IMR-90 (cell line): ENCODE measurements at regions of chr14 and their contacts with region 1.

Region 1: GRCh38 chr14:54652188-54652587 is 85.3 kb downstream of the SAMD4A start:
- DNase-seq: peak; percentile 100
- ATAC-seq: peak; percentile 88
- H3K4me3 ChIP-seq: no peak overlapping the region
- H3K27ac ChIP-seq: peak overlapping the region; percentile 64; the same call in 1 of the 2 replicates
- H3K4me1 ChIP-seq: peaks cover 41% of the 10 kb centered on the region
- H3K27me3 ChIP-seq: no peaks in the 10 kb centered on the region
- CTCF ChIP-seq: no peak
- POLR2A ChIP-seq: no peak
- RAD21 ChIP-seq: no peak; the same call in 1 of the 2 replicates

Region 2: DNA sequence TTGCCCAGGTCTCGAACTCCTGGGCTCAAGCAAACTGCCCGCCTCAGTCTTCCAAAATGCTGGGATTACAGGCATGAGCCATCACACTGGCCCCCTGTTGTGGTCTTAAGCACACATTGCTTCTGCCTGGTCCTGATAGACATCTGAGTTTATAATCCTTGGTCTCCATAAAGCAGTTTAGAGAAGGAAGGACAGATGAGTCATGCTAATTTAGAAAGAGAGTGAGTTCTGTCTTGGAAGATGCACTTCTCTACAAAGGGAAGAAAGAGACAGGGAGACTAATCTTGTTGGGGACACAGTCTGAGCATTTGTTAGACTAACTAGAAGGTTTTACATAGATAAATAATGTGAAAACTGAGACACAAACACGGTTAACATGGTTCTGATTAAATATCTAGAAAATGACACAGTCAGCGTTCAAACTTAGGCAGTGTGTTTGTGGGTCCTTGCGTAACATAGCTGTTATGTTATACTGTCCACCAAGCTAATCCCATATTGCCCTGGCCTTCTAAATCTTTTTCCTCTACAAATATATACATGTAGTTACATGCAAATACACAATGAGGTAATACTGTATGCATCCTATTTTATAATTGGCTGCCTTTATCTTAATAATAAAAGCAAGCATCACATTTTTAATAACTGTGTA is 54.3 kb before region 1 on chr14:
- CTCF ChIA-PET with region 1: interaction called, 3 read pairs
- POLR2A ChIA-PET with region 1: no interaction called
- dilution Hi-C with region 1: no loop called
- in situ Hi-C with region 1: no loop called
- intact Hi-C with region 1: loop called (anchors 2 kb)
- DNase-seq: peak; percentile 70
- ATAC-seq: peak; percentile 43
- H3K4me3 ChIP-seq: no peak overlapping the region
- H3K27ac ChIP-seq: peak overlapping the region; percentile 76; the same call in 1 of the 2 replicates
- H3K4me1 ChIP-seq: peaks cover 14% of the 10 kb centered on the region
- H3K27me3 ChIP-seq: no peaks in the 10 kb centered on the region
- CTCF ChIP-seq: no peak
- POLR2A ChIP-seq: no peak
- RAD21 ChIP-seq: no peak

Region 3: GRCh38 chr14:54669721-54670561 is 17.8 kb after region 1 on chr14:
- CTCF ChIA-PET with region 1: interaction called, 3 read pairs
- POLR2A ChIA-PET with region 1: no interaction called
- dilution Hi-C with region 1: no loop called
- in situ Hi-C with region 1: no loop called
- intact Hi-C with region 1: loop called (anchors 2 kb)
- DNase-seq: peak; percentile 85
- ATAC-seq: peak; percentile 62
- H3K4me3 ChIP-seq: no peak overlapping the region
- H3K27ac ChIP-seq: no peak overlapping the region
- H3K4me1 ChIP-seq: peaks cover 32% of the 10 kb centered on the region
- H3K27me3 ChIP-seq: no peaks in the 10 kb centered on the region
- CTCF ChIP-seq: no peak
- POLR2A ChIP-seq: no peak
- RAD21 ChIP-seq: no peak

Region 4: GRCh38 chr14:54730156-54730961 is 78.2 kb after region 1 on chr14:
- CTCF ChIA-PET with region 1: no interaction called
- POLR2A ChIA-PET with region 1: no interaction called
- dilution Hi-C with region 1: no loop called
- in situ Hi-C with region 1: no loop called
- intact Hi-C with region 1: no loop called
- DNase-seq: peak; percentile 78
- ATAC-seq: peak; percentile 62
- H3K4me3 ChIP-seq: no peak overlapping the region
- H3K27ac ChIP-seq: peak overlapping the region; percentile 57; the same call in 1 of the 2 replicates
- H3K4me1 ChIP-seq: peaks cover 14% of the 10 kb centered on the region
- H3K27me3 ChIP-seq: no peaks in the 10 kb centered on the region
- CTCF ChIP-seq: no peak
- POLR2A ChIP-seq: no peak
- RAD21 ChIP-seq: no peak

Region 5: GRCh38 chr14:54766276-54767138 is 114.3 kb after region 1 on chr14:
- CTCF ChIA-PET with region 1: no interaction called
- POLR2A ChIA-PET with region 1: no interaction called
- dilution Hi-C with region 1: no loop called
- in situ Hi-C with region 1: no loop called
- intact Hi-C with region 1: no loop called
- DNase-seq: no peak
- ATAC-seq: no peak
- H3K4me3 ChIP-seq: no peak overlapping the region
- H3K27ac ChIP-seq: no peak overlapping the region
- H3K4me1 ChIP-seq: peaks cover 8% of the 10 kb centered on the region
- H3K27me3 ChIP-seq: no peaks in the 10 kb centered on the region
- CTCF ChIP-seq: no peak
- POLR2A ChIP-seq: no peak
- RAD21 ChIP-seq: no peak

Region 6: DNA sequence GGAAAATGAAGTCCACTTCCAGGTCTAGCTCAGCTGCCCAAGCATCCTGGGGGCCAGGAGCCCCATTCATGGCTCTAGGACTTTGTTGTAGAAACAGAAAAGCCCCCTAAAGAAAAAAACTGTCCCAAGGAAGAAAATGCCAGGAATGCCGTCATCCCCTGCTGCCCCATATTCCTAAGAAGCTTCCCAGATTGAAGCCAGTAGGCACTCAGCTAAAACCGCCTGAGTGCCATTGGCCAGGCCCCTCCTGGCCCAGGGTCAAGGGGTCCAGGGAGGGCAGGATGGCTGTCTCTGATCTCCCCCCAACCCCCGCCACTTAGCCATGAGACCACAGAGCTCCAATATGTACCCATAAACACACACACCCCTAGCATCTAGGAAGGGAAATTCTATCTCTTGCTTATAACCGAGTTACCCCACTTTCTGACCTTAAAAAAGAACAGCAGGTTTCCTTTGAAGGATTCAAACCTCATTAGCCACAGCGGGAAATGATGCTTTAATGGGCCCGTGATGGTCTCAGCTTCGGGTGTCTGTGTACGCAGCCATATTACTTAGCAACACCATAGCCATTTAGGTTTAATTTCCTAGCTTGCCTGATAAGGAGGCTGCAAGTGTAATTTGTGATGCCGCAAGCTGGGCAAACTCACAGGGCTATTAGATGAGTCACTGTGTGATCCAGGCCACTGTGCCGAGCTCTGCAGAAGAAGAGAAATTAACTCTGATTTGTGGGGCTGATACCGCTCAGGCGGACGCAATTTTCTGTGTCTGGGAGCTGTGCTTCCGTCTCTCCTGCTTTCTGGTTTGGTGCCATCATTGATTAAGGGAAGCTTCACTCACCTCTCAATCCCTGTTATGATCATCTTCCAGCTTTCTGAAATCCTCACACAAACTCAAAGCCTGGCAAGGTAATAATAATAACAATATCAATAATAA is 166.3 kb after region 1 on chr14:
- CTCF ChIA-PET with region 1: no interaction called
- POLR2A ChIA-PET with region 1: no interaction called
- dilution Hi-C with region 1: no loop called
- in situ Hi-C with region 1: no loop called
- intact Hi-C with region 1: no loop called
- DNase-seq: peak; percentile 69
- ATAC-seq: peak; percentile 95
- H3K4me3 ChIP-seq: no peak overlapping the region
- H3K27ac ChIP-seq: no peak overlapping the region
- H3K4me1 ChIP-seq: no peaks in the 10 kb centered on the region; the same call in 1 of the 2 replicates
- H3K27me3 ChIP-seq: peaks cover 18% of the 10 kb centered on the region
- CTCF ChIP-seq: no peak
- POLR2A ChIP-seq: no peak
- RAD21 ChIP-seq: no peak

Region 7: GRCh38 chr14:54908190-54908589 is 256.0 kb after region 1 on chr14:
- CTCF ChIA-PET with region 1: no interaction called
- POLR2A ChIA-PET with region 1: no interaction called
- dilution Hi-C with region 1: no loop called
- in situ Hi-C with region 1: no loop called
- intact Hi-C with region 1: no loop called
- DNase-seq: no peak
- ATAC-seq: no peak
- H3K4me3 ChIP-seq: no peak overlapping the region
- H3K27ac ChIP-seq: no peak overlapping the region
- H3K4me1 ChIP-seq: no peaks in the 10 kb centered on the region
- H3K27me3 ChIP-seq: peaks cover 9% of the 10 kb centered on the region
- CTCF ChIP-seq: no peak
- POLR2A ChIP-seq: no peak
- RAD21 ChIP-seq: no peak